ENCODE measurements at regions of chr2 and their contacts with region 1.

Region 1: DNA sequence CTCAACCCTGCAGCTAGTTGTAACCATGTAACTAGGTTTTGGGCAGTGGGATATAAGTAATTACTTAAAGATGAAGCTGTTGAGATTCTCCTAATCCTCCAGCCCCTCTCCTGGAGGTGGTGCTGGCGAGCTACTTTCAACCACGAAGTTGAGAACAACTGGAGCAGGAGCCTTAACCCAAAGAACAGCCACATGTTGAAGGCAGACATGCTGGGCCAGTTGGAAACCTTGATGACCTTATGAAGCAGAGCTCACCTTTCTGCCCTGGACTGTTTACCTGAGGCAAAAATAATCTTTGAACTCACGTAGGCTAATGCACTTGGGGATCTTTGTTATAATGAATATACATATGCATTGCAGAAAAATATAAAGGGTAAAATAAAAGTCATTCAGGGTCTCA is 89.6 kb upstream of the NPAS2 start:
- DNase-seq: peak; percentile 61 to 72
- H3K4me3 ChIP-seq: no peak overlapping the region
- H3K27ac ChIP-seq: no peak overlapping the region
- H3K4me1 ChIP-seq: peaks cover 29% of the 10 kb centered on the region
- H3K27me3 ChIP-seq: no peaks in the 10 kb centered on the region
- CTCF ChIP-seq: peak; percentile 86

Region 2: GRCh38 chr2:100786297-100786658 is 55.9 kb after region 1 on chr2:
- CTCF ChIA-PET with region 1: no interaction called
- POLR2A ChIA-PET with region 1: no interaction called
- intact Hi-C with region 1: loop called (anchors 5 kb)
- DNase-seq: peak; percentile 75 to 96
- H3K4me3 ChIP-seq: peak overlapping the region; percentile 33; the same call in 1 of the 2 replicates
- H3K27ac ChIP-seq: peak overlapping the region; percentile 77
- H3K4me1 ChIP-seq: peaks cover 63% of the 10 kb centered on the region
- H3K27me3 ChIP-seq: no peaks in the 10 kb centered on the region
- CTCF ChIP-seq: no peak

Region 3: DNA sequence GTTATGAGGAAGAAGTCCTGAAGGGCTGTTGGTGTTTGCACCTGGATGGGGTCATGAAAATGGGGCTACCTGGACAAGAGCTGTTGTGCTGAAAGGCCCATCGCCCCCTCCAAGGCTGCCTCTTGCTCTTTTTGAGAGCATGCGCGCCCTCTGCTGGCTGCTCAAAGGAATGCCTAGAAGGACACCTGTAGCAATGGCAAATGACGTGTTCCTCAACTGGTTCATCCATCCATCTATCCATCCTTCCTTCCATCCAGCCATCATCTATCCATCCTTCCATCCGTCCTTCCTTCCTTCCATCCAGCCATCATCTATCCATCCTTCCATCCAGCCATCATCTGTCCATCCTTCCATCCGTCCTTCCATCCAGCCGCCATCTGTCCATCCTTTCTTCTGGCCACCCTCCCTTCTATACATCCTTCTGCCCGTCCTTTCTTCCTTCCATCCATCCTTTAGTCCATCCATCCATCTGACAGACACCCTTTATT is 254.6 kb after region 1 on chr2:
- CTCF ChIA-PET with region 1: no interaction called
- POLR2A ChIA-PET with region 1: no interaction called
- intact Hi-C with region 1: loop called (anchors 1 kb)
- DNase-seq: peak; percentile 50 to 63
- H3K4me3 ChIP-seq: no peak overlapping the region
- H3K27ac ChIP-seq: no peak overlapping the region
- H3K4me1 ChIP-seq: no peaks in the 10 kb centered on the region
- H3K27me3 ChIP-seq: no peaks in the 10 kb centered on the region
- CTCF ChIP-seq: peak; percentile 94